ENCODE measurements at regions of chr11 and their contacts with region 1.

Region 1: DNA sequence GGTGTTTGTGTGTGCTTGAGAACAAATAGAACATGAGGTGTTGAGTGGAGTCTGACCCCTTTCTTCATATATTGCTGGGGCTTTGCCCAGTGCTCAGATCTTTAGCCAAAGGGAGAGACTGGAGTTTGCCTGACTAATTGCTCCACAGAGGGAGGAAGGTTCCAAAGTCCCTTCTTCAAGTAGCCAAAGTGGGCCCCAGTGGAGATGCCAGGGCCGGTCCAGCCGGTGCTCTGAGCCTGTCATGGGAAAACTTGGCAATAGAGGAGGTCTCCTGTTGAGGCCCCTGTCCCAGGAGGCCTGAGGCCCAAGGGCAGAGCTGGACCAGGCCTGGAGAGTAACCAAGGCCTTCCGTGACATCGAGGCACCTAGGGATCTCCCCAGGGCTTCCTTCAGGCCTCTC is 112.3 kb downstream of the DSCAML1 start:
- DNase-seq: peak; percentile 68 to 76
- H3K4me3 ChIP-seq: no peak overlapping the region
- H3K4me3 Mint-ChIP-seq: no peak overlapping the region
- H3K27ac Mint-ChIP-seq: peak overlapping the region; percentile 27
- H3K4me1 ChIP-seq: peaks cover 18% of the 10 kb centered on the region
- H3K4me1 Mint-ChIP-seq: peaks cover 13% of the 10 kb centered on the region
- H3K27me3 ChIP-seq: no peaks in the 10 kb centered on the region
- H3K27me3 Mint-ChIP-seq: no peaks in the 10 kb centered on the region
- CTCF ChIP-seq: no peak

Region 2: GRCh38 chr11:117702965-117703598 is 18.4 kb after region 1 on chr11:
- CTCF ChIA-PET with region 1: interaction called, 7 read pairs
- POLR2A ChIA-PET with region 1: no interaction called
- intact Hi-C with region 1: loop called (anchors 2 kb)
- DNase-seq: peak; percentile 77 to 78
- H3K4me3 ChIP-seq: no peak overlapping the region
- H3K4me3 Mint-ChIP-seq: peak overlapping the region; percentile 25
- H3K27ac Mint-ChIP-seq: peak overlapping the region; percentile 25
- H3K4me1 ChIP-seq: peaks cover 33% of the 10 kb centered on the region
- H3K4me1 Mint-ChIP-seq: peaks cover 37% of the 10 kb centered on the region
- H3K27me3 ChIP-seq: no peaks in the 10 kb centered on the region
- H3K27me3 Mint-ChIP-seq: no peaks in the 10 kb centered on the region
- CTCF ChIP-seq: peak in 1 of 2 experiments; percentile 63

Measured in Caco-2 (cell line).